ENCODE measurements at regions of chr17 and their contacts with region 1.

Region 1: GRCh38 chr17:9790889-9791876 is at the start of gene DHRS7C:
- DNase-seq: no peak
- ATAC-seq: peak; percentile 88
- total RNA-seq, gene DHRS7C: 69.8 TPM

Region 2: GRCh38 chr17:9890124-9890523 is 98.9 kb after region 1 on chr17:
- intact Hi-C with region 1: loop called (anchors 5 kb)
- DNase-seq: no peak
- ATAC-seq: peak; percentile 68

Measured in Right ventricle myocardium inferior (tissue), 1 donor.